ENCODE measurements at regions of chr9 and their contacts with region 1.

Region 1: DNA sequence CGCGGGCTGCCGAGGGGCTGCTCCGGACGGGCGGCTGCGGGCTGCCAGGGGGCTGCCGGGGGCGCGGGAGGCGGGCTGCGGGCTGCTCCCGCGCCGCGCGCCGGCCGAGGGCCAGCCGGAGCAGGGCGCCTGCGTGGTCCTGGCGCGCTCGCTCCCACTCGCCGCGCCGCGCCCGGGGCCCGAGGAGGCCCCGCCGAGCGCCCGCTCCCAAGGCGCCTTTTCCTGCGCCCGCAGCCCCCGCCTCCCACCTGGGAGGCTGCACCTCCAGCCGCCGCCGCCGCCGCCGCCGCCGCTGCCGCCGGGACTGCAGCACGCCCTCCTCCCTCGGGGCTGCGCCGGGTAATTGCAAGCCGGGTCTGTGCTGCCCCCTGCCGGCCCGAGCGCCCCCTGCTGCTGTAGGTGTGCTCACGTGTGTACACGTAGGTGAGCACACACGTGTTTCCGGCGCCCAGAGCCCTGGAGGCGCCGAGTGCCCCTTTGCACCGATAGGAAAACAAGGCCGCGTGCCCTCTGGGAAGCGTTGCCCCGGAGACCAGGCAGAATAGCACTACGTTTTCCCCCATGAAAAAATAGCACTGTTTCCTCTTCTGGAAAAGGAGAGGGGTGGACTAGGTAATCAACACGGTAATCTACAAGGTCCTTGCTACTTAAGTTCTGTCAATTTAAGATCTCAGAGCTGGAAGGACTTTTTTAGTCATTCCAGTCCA is at the start of gene EPB41L4B:
- DNase-seq: peak; percentile 86
- H3K4me3 ChIP-seq: peak within 1 kb of the TSS; percentile 48 to 79 (median 55)
- H3K27ac ChIP-seq: peak within 1 kb of the TSS; percentile 51
- H3K4me1 ChIP-seq: peaks cover 45% of the 10 kb centered on the region
- H3K27me3 ChIP-seq: no peaks in the 10 kb centered on the region
- CTCF ChIP-seq: peak; percentile 75 to 90
- total RNA-seq, gene EPB41L4B: 3.5 to 4.8 TPM

Region 2: GRCh38 chr9:109012876-109013678 is 307.8 kb before region 1 on chr9 and contains the start of gene CTNNAL1:
- CTCF ChIA-PET with region 1: no interaction called
- dilution Hi-C with region 1: no loop called
- in situ Hi-C with region 1: no loop called
- intact Hi-C with region 1: loop called (anchors 5 kb)
- DNase-seq: peak; percentile 71
- H3K4me3 ChIP-seq: peak within 1 kb of the TSS; percentile 55 to 73 (median 69)
- H3K27ac ChIP-seq: peak within 1 kb of the TSS; percentile 91
- H3K4me1 ChIP-seq: peaks cover 27% of the 10 kb centered on the region
- H3K27me3 ChIP-seq: no peaks in the 10 kb centered on the region
- CTCF ChIP-seq: no peak
- total RNA-seq, gene CTNNAL1: 43.7 to 82.2 TPM

Region 3: GRCh38 chr9:109192732-109193361 is 128.0 kb before region 1 on chr9:
- CTCF ChIA-PET with region 1: no interaction called
- dilution Hi-C with region 1: no loop called
- in situ Hi-C with region 1: no loop called
- intact Hi-C with region 1: loop called (anchors 1 kb)
- DNase-seq: no peak
- H3K4me3 ChIP-seq: no peak overlapping the region
- H3K27ac ChIP-seq: no peak overlapping the region
- H3K4me1 ChIP-seq: no peaks in the 10 kb centered on the region
- H3K27me3 ChIP-seq: no peaks in the 10 kb centered on the region
- CTCF ChIP-seq: peak; percentile 33 to 61

Region 4: GRCh38 chr9:109258481-109259302 is 62.2 kb before region 1 on chr9:
- CTCF ChIA-PET with region 1: no interaction called
- dilution Hi-C with region 1: no loop called
- in situ Hi-C with region 1: loop called in 1 of 2 experiments (anchors 5 kb)
- intact Hi-C with region 1: no loop called
- DNase-seq: no peak
- H3K4me3 ChIP-seq: no peak overlapping the region
- H3K27ac ChIP-seq: no peak overlapping the region
- H3K4me1 ChIP-seq: peaks cover 13% of the 10 kb centered on the region
- H3K27me3 ChIP-seq: no peaks in the 10 kb centered on the region
- CTCF ChIP-seq: no peak

Region 5: DNA sequence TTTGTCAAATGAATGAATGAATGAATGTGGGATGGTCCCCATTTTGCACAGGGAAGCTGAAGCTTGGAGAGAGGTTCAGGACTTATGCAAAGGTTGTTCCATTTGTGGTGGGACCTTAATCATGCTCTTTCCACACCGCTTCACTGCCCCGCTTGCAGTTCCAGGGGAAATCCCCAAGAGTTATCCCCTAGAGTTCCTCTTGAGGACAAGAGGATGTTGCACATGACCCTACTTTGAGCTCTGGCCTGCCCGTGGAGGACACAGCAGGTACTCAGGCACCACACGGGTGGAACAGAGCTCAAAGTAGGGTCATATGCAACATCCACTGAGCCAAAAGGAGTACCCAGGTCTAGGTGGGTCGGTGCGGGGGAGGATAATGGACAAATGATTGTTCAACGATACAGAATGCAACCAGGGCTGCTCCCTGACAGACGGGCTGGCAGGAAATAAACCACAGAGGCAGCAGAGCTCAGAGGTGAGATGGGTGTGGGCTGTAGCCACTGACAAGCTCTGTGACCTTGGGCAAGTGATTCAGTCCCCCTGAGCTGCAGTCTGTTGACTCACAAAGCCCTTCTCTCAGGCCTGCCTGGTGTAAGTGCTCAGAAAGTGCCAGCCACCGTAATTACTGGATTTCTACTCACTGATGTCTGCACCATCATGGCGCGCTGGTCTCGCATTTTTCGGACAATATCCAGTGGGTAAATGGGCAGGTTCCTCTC is 60.3 kb after region 1 on chr9:
- CTCF ChIA-PET with region 1: interaction called, 3 read pairs
- dilution Hi-C with region 1: loop called (anchors 10 kb)
- in situ Hi-C with region 1: no loop called
- intact Hi-C with region 1: no loop called
- DNase-seq: peak; percentile 43
- H3K4me3 ChIP-seq: no peak overlapping the region
- H3K27ac ChIP-seq: no peak overlapping the region
- H3K4me1 ChIP-seq: no peaks in the 10 kb centered on the region
- H3K27me3 ChIP-seq: no peaks in the 10 kb centered on the region
- CTCF ChIP-seq: no peak

Measured in mammary epithelial cell (primary cell).